ENCODE measurements at regions of chr11 and their contacts with region 1.

Region 1: DNA sequence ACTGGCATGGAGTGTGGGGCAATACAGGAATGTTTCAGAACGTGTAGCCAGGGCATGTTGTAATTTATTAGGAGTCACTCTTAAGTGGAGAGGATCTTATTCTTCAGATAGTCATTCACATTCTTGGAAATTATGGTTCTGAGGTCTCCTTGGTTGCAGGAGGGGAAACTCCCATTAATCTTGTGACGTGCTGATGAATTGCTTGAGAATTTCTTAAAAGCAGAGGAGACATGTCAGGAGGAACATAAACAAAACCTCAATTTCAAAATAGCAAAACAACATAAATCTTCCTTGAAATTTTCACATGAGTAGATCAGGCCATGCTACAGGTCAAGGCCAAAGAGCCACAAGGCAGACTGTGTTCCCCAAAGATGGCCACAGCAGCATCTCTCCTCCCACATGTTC is 50.4 kb downstream of the ADM start:
- DNase-seq: no peak
- H3K4me3 ChIP-seq: no peak overlapping the region
- H3K27ac ChIP-seq: no peak overlapping the region
- H3K4me1 ChIP-seq: peaks cover 13 to 21% of the 10 kb centered on the region in 2 experiments
- H3K27me3 ChIP-seq: no peaks in the 10 kb centered on the region
- CTCF ChIP-seq: no peak
- EP300 ChIP-seq: no peak
- RAD21 ChIP-seq: no peak

Region 2: DNA sequence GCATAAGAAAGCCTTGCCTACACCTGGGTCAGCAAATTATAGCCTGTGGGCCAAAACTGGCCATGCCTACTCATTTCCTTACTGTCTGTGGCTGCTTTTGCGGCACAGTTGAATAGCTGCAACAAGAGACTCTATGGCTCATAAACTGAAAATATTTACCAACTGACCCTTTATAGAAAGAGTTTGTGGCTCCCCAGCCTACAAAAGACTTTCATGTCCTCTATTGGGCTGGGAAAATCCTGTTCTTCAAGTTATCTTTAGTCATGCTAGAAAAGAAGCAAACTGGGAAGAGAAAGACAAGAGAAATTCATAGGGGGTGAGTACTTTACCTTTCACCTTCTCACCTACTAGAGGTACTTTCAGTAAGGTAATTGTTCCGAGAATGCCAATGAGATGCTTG is 516.3 kb before region 1 on chr11:
- CTCF ChIA-PET with region 1: no interaction called
- POLR2A ChIA-PET with region 1: no interaction called
- DNase-seq: no peak
- H3K4me3 ChIP-seq: no peak overlapping the region
- H3K27ac ChIP-seq: no peak overlapping the region; a peak in 1 of 4 replicates
- H3K4me1 ChIP-seq: peaks cover 0 to 4% of the 10 kb centered on the region in 2 experiments; a peak in 3 of 4 replicates
- H3K27me3 ChIP-seq: no peaks in the 10 kb centered on the region
- CTCF ChIP-seq: no peak
- EP300 ChIP-seq: no peak
- RAD21 ChIP-seq: no peak

Region 3: GRCh38 chr11:10366568-10367370 is 11.5 kb after region 1 on chr11:
- CTCF ChIA-PET with region 1: interaction called, 14 read pairs
- POLR2A ChIA-PET with region 1: interaction called, 3 read pairs
- DNase-seq: peak; percentile 39
- H3K4me3 ChIP-seq: no peak overlapping the region
- H3K27ac ChIP-seq: no peak overlapping the region; a peak in 1 of 4 replicates
- H3K4me1 ChIP-seq: peaks cover 0 to 8% of the 10 kb centered on the region in 2 experiments; a peak in 1 of 4 replicates
- H3K27me3 ChIP-seq: no peaks in the 10 kb centered on the region
- CTCF ChIP-seq: peak; percentile 72
- EP300 ChIP-seq: 0 out of 4 replicates have a peak, but pooled peaks of 1 of the 2 experiments have one; percentile 5
- RAD21 ChIP-seq: peak; percentile 73

Measured in SK-N-SH (cell line).